ENCODE measurements at regions of chr15 and their contacts with region 1.

Region 1: DNA sequence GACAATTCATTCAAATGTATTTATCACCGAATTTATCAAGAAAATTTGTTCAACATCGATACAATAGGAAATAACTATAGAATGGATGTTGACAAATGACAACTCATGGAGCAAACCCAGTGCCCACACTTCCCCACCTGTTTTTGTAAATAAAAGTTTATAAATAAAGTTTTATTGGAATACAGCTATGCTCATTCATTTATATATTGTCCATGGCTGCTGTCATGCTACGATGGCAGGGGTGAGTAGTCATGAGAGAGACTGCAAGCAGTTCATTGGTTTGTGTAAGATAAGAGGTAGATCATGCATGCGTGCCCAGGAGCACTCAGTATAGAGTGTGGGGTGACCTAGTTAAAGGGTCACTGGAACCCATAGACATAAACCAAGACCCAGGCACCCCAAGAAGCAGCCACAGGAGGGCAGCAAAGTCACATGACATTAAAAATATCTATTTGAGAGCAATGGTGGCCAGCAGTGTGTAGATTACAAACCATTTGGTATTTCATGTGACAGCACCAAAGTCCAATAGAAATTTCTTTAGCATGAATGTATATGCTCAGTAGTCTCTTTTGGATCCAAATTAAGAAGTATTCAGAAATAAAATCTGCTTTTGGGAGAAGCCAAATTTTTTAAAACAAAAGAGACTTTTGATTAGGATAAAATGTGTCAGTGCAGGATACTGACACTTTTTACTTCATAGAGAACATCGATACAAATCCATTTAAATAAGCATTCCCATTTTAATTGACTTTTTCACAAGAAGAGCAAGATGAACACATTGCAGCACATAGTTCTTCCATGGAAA is 794.8 kb downstream of the MCTP2 start:
- DNase-seq: peak in 3 of 5 donors; percentile 16 to 27 (median 26)
- ATAC-seq: peak in 2 of 4 donors; percentile 33 to 47
- H3K4me3 ChIP-seq: no peak overlapping the region
- H3K27ac ChIP-seq: no peak overlapping the region
- H3K4me1 ChIP-seq: no peaks in the 10 kb centered on the region
- H3K27me3 ChIP-seq: no peaks in the 10 kb centered on the region
- CTCF ChIP-seq: peak; percentile 36 to 66 (median 47)
- POLR2A ChIP-seq: no peak

Region 2: DNA sequence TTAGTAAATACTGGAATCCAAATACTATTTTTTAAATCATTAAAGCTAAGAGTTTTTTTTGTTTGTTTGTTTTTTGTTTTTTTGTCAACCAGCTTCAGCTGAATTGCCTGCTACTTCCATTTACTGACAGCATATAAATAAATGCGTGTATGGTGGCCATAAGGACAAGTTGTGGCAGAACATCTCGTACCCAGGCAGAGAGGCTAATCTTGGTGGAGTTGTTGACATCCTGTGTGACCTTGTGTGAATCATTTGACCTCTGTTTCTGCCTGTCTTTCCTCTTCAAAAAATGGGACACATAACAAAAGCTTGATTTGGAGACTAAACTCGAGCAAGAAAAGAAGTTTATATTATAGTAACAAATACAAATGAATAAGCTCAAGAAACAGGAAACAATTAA is 60.5 kb before region 1 on chr15:
- intact Hi-C with region 1: loop called in 1 of 10 experiments (anchors 10 kb)
- DNase-seq: no peak
- ATAC-seq: peak in 2 of 4 donors; percentile 36 to 64
- H3K4me3 ChIP-seq: no peak overlapping the region
- H3K27ac ChIP-seq: peak overlapping the region in 5 of 12 donors; percentile 21 to 54 (median 43)
- H3K4me1 ChIP-seq: peaks cover 0 to 5% (median 0%) of the 10 kb centered on the region in 12 donors
- H3K27me3 ChIP-seq: no peaks in the 10 kb centered on the region
- CTCF ChIP-seq: no peak
- POLR2A ChIP-seq: no peak

Region 3: GRCh38 chr15:95247099-95247984 is 221.2 kb after region 1 on chr15:
- intact Hi-C with region 1: loop called in 3 of 10 experiments (anchors 5 to 10 kb)
- DNase-seq: no peak
- ATAC-seq: no peak
- H3K4me3 ChIP-seq: no peak overlapping the region
- H3K27ac ChIP-seq: no peak overlapping the region
- H3K4me1 ChIP-seq: peaks cover 0 to 12% (median 0%) of the 10 kb centered on the region in 12 donors
- H3K27me3 ChIP-seq: no peaks in the 10 kb centered on the region
- CTCF ChIP-seq: no peak
- POLR2A ChIP-seq: no peak

Region 4: DNA sequence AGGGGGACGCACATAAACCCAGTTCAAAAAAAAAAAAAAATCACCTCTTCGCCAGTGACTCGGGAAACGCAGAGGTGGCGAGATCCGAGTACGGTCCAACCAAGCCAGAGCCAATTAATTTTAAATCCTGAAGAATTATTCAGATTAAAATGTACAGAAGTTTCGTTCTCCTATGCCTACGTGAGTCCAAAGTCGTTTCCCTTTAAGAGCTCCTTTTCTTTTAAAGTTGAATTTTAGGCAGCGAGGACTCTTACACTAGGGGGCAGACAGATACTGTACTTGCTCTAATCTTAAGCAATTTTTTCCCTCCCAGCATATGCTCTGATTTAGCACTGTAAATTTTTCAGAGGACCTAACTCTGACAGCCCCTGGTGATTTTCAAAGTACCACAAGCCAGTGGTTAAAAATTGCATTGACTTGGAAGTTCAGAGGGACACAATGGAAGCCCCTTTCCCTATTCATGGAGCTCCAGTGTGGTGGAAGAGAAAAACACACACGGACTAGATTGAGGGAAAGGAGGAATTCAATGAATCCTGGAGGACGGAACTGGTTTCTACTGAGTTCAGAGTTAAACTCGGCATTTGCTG is 1301.1 kb after region 1 on chr15:
- intact Hi-C with region 1: loop called in 2 of 10 experiments (anchors 10 kb)
- DNase-seq: no peak
- ATAC-seq: peak; percentile 28 to 64 (median 41)
- H3K4me3 ChIP-seq: peak overlapping the region; percentile 32 to 91 (median 72)
- H3K27ac ChIP-seq: peak overlapping the region; percentile 66 to 90 (median 82)
- H3K4me1 ChIP-seq: peaks cover 0 to 32% (median 5%) of the 10 kb centered on the region in 12 donors
- H3K27me3 ChIP-seq: peaks cover 0 to 87% (median 39%) of the 10 kb centered on the region in 9 donors
- CTCF ChIP-seq: peak; percentile 42 to 83 (median 70)
- POLR2A ChIP-seq: no peak